H1 (cell line): ENCODE measurements at regions of chr4 and their contacts with region 1.

Region 1: DNA sequence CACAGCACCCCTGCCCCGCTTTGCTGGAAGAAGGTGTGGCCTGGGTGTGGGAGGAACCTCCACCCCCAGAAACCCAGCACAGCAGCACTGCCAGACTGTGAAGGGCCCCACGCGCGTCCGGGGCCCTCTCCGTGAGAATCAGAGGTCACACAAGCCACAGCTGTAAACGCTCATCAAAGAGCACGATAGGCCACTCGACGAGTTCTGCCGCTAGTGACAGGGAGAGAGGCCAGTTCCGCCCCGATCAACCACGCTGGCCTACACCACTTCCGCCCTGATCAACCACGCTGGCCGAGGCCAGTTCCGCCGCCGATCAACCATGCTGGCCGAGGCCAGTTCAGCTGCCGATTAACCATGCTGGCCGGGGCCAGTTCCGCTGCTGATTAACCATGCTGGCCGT is 25.9 kb upstream of the ADRA2C start:
- DNase-seq: no peak
- H3K4me3 ChIP-seq: no peak overlapping the region
- H3K27ac ChIP-seq: no peak overlapping the region
- H3K4me1 ChIP-seq: peaks cover 0 to 9% (median 0%) of the 10 kb centered on the region in 4 experiments; a peak in 2 of 7 replicates
- H3K27me3 ChIP-seq: no peaks in the 10 kb centered on the region; a peak in 2 of 7 replicates
- CTCF ChIP-seq: no peak
- EP300 ChIP-seq: no peak
- POLR2A ChIP-seq: no peak
- RAD21 ChIP-seq: no peak

Region 2: GRCh38 chr4:3285558-3286334 is 454.5 kb before region 1 on chr4:
- CTCF ChIA-PET with region 1: no interaction called
- POLR2A ChIA-PET with region 1: no interaction called
- DNase-seq: peak in 1 of 2 experiments; percentile 46
- H3K4me3 ChIP-seq: no peak overlapping the region
- H3K27ac ChIP-seq: no peak overlapping the region
- H3K4me1 ChIP-seq: peaks cover 0 to under 1% (median 0%) of the 10 kb centered on the region in 4 experiments; a peak in 3 of 7 replicates
- H3K27me3 ChIP-seq: peaks cover 0 to 4% (median 1%) of the 10 kb centered on the region in 4 experiments; a peak in 3 of 7 replicates
- CTCF ChIP-seq: no peak
- EP300 ChIP-seq: no peak
- POLR2A ChIP-seq: no peak
- RAD21 ChIP-seq: no peak

Region 3: GRCh38 chr4:3729188-3729875 is 10.9 kb before region 1 on chr4:
- CTCF ChIA-PET with region 1: interaction called, 25 read pairs
- POLR2A ChIA-PET with region 1: interaction called, 6 read pairs
- DNase-seq: no peak
- H3K4me3 ChIP-seq: no peak overlapping the region
- H3K27ac ChIP-seq: no peak overlapping the region
- H3K4me1 ChIP-seq: peaks cover 0 to 47% (median 27%) of the 10 kb centered on the region in 4 experiments; a peak in 6 of 7 replicates
- H3K27me3 ChIP-seq: peaks cover 0 to 19% (median 16%) of the 10 kb centered on the region in 4 experiments; a peak in 5 of 7 replicates
- CTCF ChIP-seq: no peak
- EP300 ChIP-seq: no peak
- POLR2A ChIP-seq: no peak
- RAD21 ChIP-seq: no peak